ENCODE measurements at regions of chr13 and their contacts with region 1.

Region 1: DNA sequence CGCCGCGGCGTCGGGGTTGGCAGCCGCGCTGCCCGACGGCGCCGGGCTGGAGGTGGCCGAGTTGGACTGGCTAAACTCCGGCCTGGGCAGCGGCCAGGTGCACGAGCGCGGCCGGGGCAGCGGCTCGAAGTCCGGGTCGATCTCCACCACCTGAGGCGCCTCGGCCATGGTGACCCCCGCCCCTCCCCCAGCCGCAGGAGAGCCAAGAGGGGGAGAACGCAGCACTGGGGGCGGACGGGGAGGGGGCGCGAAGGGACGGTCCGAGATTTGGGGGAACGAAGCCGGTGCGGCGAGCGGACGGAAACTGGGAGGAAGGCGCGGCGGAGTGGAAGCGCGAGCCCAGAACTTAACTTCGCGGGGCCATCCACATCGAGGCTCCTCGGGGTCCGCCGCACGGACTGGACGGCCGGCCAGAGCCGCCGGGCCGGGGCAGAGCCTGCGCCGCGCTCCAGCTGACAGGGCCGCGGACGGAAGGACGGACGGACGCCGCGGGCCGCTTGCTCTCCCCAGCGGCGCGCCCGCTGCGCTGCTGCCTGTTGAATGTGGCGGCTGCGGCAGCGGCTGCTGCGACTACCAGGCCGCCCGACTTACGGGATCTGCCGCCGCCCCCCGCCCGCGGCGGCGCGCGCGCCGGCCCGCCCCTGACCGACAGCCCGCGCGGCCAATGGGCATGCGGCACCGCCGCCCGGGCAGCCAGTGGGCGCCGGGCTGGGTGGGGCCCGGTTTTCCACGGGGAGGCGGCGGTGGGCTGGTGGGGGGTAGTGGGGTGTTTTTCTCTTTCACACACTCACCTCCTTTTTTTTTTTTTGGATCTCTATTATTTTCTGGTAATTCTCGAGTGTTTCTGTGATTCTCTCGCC is at the start of gene FOXO1:
- DNase-seq: no peak
- ATAC-seq: peak; percentile 68
- H3K4me3 ChIP-seq: peak within 1 kb of the TSS; percentile 92
- H3K27ac ChIP-seq: peak within 1 kb of the TSS; percentile 89
- H3K4me1 ChIP-seq: peaks cover 9% of the 10 kb centered on the region
- H3K27me3 ChIP-seq: no peaks in the 10 kb centered on the region
- CTCF ChIP-seq: peak in 1 of 3 experiments; percentile 14; a peak in 1 of 6 replicates
- EP300 ChIP-seq: no peak
- POLR2A ChIP-seq: peak; percentile 92
- RAD21 ChIP-seq: no peak
- polyA plus RNA-seq, gene FOXO1: 0.64 to 0.72 TPM

Region 2: GRCh38 chr13:39825886-39826285 is 840.4 kb before region 1 on chr13:
- CTCF ChIA-PET with region 1: no interaction called
- POLR2A ChIA-PET with region 1: no interaction called
- RAD21 ChIA-PET with region 1: no interaction called
- SMC1A ChIA-PET with region 1: no interaction called
- in situ Hi-C with region 1: no loop called
- intact Hi-C with region 1: no loop called
- DNase-seq: no peak
- ATAC-seq: no peak
- H3K4me3 ChIP-seq: no peak overlapping the region
- H3K27ac ChIP-seq: no peak overlapping the region
- H3K4me1 ChIP-seq: no peaks in the 10 kb centered on the region
- H3K27me3 ChIP-seq: no peaks in the 10 kb centered on the region; a peak in 1 of 4 replicates
- CTCF ChIP-seq: no peak
- EP300 ChIP-seq: no peak
- POLR2A ChIP-seq: no peak
- RAD21 ChIP-seq: no peak

Region 3: GRCh38 chr13:40069173-40070044 is 596.9 kb before region 1 on chr13:
- CTCF ChIA-PET with region 1: interaction called, 7 read pairs
- POLR2A ChIA-PET with region 1: no interaction called
- RAD21 ChIA-PET with region 1: interaction called, 12 read pairs
- SMC1A ChIA-PET with region 1: interaction called, 8 read pairs
- in situ Hi-C with region 1: no loop called
- intact Hi-C with region 1: no loop called
- DNase-seq: no peak
- ATAC-seq: peak; percentile 92
- H3K4me3 ChIP-seq: no peak overlapping the region
- H3K27ac ChIP-seq: no peak overlapping the region
- H3K4me1 ChIP-seq: no peaks in the 10 kb centered on the region
- H3K27me3 ChIP-seq: peaks cover 0 to 8% of the 10 kb centered on the region in 2 experiments; a peak in 1 of 4 replicates
- CTCF ChIP-seq: peak; percentile 76 to 81 (median 79)
- EP300 ChIP-seq: no peak
- POLR2A ChIP-seq: no peak
- RAD21 ChIP-seq: peak; percentile 82

Region 4: GRCh38 chr13:40230833-40231266 is 435.4 kb before region 1 on chr13:
- CTCF ChIA-PET with region 1: no interaction called
- POLR2A ChIA-PET with region 1: no interaction called
- RAD21 ChIA-PET with region 1: no interaction called
- SMC1A ChIA-PET with region 1: no interaction called
- in situ Hi-C with region 1: no loop called
- intact Hi-C with region 1: no loop called
- DNase-seq: no peak
- ATAC-seq: no peak
- H3K4me3 ChIP-seq: no peak overlapping the region
- H3K27ac ChIP-seq: no peak overlapping the region
- H3K4me1 ChIP-seq: no peaks in the 10 kb centered on the region
- H3K27me3 ChIP-seq: peaks cover 0 to 3% of the 10 kb centered on the region in 2 experiments; a peak in 3 of 4 replicates
- CTCF ChIP-seq: no peak
- EP300 ChIP-seq: no peak
- POLR2A ChIP-seq: no peak
- RAD21 ChIP-seq: no peak

Region 5: GRCh38 chr13:40292108-40292507 is 374.2 kb before region 1 on chr13:
- CTCF ChIA-PET with region 1: no interaction called
- POLR2A ChIA-PET with region 1: no interaction called
- RAD21 ChIA-PET with region 1: no interaction called
- SMC1A ChIA-PET with region 1: no interaction called
- in situ Hi-C with region 1: no loop called
- intact Hi-C with region 1: no loop called
- DNase-seq: no peak
- ATAC-seq: no peak
- H3K4me3 ChIP-seq: no peak overlapping the region
- H3K27ac ChIP-seq: no peak overlapping the region
- H3K4me1 ChIP-seq: no peaks in the 10 kb centered on the region
- H3K27me3 ChIP-seq: no peaks in the 10 kb centered on the region
- CTCF ChIP-seq: no peak
- EP300 ChIP-seq: no peak
- POLR2A ChIP-seq: no peak
- RAD21 ChIP-seq: no peak

Region 6: DNA sequence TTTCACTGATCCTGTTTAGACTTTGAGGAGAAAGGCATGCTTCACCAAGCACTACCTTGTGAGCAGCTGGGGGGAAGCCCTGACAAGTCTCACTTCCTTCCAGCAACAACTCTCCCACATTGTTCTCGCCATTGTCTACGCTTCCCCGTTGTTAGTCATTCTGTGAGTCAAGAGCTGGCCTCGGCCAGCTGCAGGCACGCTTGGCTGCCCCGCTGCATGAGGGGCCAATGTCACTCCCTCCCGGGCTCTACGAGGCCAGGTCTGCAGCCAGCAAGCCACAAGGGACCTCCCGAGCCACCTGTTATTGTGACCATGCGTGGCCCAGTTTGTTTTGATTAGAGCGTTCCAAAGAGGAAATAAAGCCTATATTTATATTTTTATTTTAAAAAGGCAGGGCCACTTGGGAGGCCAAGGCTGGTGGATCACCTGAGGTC is 220.7 kb before region 1 on chr13:
- CTCF ChIA-PET with region 1: interaction called, 3 read pairs
- POLR2A ChIA-PET with region 1: no interaction called
- RAD21 ChIA-PET with region 1: no interaction called
- SMC1A ChIA-PET with region 1: interaction called, 8 read pairs
- in situ Hi-C with region 1: loop called (anchors 5 kb)
- intact Hi-C with region 1: loop called (anchors 2 kb)
- DNase-seq: peak; percentile 99
- ATAC-seq: peak; percentile 99
- H3K4me3 ChIP-seq: no peak overlapping the region
- H3K27ac ChIP-seq: peak overlapping the region; percentile 42
- H3K4me1 ChIP-seq: peaks cover 13% of the 10 kb centered on the region
- H3K27me3 ChIP-seq: no peaks in the 10 kb centered on the region
- CTCF ChIP-seq: no peak
- EP300 ChIP-seq: peak; percentile 100
- POLR2A ChIP-seq: no peak
- RAD21 ChIP-seq: peak; percentile 35; the same call in 1 of the 2 replicates

Region 7: DNA sequence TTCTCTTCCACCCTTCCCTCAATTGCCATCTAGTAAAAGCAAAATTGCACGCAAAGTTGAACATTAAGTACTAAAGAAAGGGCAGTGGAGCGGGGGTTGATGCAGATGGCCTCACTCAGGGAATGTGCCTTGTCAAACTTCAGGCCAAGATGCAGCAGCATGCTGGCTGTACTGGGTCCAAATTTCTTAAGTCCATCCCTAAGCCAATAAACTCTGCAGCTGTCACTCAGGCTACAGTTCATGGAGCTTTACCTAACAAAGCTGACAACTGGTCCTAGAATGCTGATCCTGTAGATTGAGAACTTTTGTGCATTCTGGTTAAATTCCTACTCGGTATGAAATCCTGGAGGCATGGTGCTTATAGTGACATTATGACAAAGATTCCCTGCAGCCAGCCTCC is 88.2 kb before region 1 on chr13:
- CTCF ChIA-PET with region 1: no interaction called
- POLR2A ChIA-PET with region 1: no interaction called
- RAD21 ChIA-PET with region 1: no interaction called
- SMC1A ChIA-PET with region 1: no interaction called
- in situ Hi-C with region 1: no loop called
- intact Hi-C with region 1: no loop called
- DNase-seq: no peak
- ATAC-seq: no peak
- H3K4me3 ChIP-seq: no peak overlapping the region
- H3K27ac ChIP-seq: no peak overlapping the region
- H3K4me1 ChIP-seq: no peaks in the 10 kb centered on the region; the same call in 1 of the 2 replicates
- H3K27me3 ChIP-seq: no peaks in the 10 kb centered on the region
- CTCF ChIP-seq: no peak
- EP300 ChIP-seq: no peak
- POLR2A ChIP-seq: no peak
- RAD21 ChIP-seq: no peak

Region 8: GRCh38 chr13:40589285-40590109 is 76.8 kb before region 1 on chr13:
- CTCF ChIA-PET with region 1: no interaction called
- POLR2A ChIA-PET with region 1: interaction called, 3 read pairs
- RAD21 ChIA-PET with region 1: no interaction called
- SMC1A ChIA-PET with region 1: interaction called, 4 read pairs
- in situ Hi-C with region 1: no loop called
- intact Hi-C with region 1: loop called (anchors 2 kb)
- DNase-seq: peak; percentile 88
- ATAC-seq: peak; percentile 95
- H3K4me3 ChIP-seq: 0 out of 2 replicates have a peak overlapping the region, but pooled peaks have one; percentile 13
- H3K27ac ChIP-seq: peak overlapping the region; percentile 63
- H3K4me1 ChIP-seq: peaks cover 40% of the 10 kb centered on the region
- H3K27me3 ChIP-seq: no peaks in the 10 kb centered on the region
- CTCF ChIP-seq: no peak
- EP300 ChIP-seq: peak; percentile 33 to 79; a peak in 3 of 4 replicates
- POLR2A ChIP-seq: no peak
- RAD21 ChIP-seq: no peak

Region 9: DNA sequence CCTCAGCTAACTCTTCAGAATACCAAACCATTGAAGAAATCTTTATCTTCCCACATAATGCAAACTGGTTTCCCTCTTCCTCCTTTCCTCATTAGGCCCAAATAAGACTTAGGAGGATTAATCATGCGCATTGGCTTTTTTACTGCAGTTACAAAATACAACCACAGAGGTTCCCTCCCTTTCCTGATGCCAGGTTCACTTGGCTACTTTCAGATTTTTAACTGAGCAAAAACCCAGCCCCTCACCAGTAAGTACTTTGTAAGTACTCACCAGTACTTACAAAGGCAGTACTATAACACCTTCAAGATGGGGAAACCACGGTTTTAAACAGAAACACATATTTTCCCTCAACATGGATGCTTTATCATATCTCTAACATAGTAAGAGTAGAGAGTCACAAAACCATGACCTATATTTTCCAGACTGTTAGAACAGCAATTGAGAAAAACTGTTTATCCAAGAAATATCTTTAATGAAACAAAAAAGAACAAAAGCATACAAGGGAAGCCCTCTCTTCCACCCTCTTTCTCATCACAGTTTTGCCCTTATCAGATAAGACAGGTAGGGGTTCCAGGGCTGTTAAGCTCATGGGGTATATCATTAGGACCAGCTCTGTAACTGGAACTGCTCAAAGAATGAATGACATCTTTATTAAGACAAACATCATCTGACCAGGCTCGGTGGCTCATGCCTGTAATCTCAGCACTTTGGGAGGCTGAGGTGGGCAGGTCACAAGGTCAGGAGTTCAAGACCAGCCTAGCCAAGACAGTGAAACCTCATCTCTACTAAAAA is 12.6 kb before region 1 on chr13:
- CTCF ChIA-PET with region 1: interaction called, 4 read pairs
- POLR2A ChIA-PET with region 1: interaction called, 8 read pairs
- RAD21 ChIA-PET with region 1: interaction called, 14 read pairs
- SMC1A ChIA-PET with region 1: interaction called, 20 read pairs
- in situ Hi-C with region 1: no loop called
- intact Hi-C with region 1: no loop called
- DNase-seq: no peak
- ATAC-seq: peak; percentile 58
- H3K4me3 ChIP-seq: peak overlapping the region; percentile 33
- H3K27ac ChIP-seq: peak overlapping the region; percentile 83
- H3K4me1 ChIP-seq: peaks cover 36% of the 10 kb centered on the region
- H3K27me3 ChIP-seq: no peaks in the 10 kb centered on the region
- CTCF ChIP-seq: no peak
- EP300 ChIP-seq: no peak
- POLR2A ChIP-seq: no peak
- RAD21 ChIP-seq: no peak